OCI-LY7 (cell line): ENCODE measurements at regions of chr2 and their contacts with region 1.

Region 1: GRCh38 chr2:205706769-205707381 is 24.6 kb downstream of the NRP2 start:
- DNase-seq: peak; percentile 88
- H3K4me3 ChIP-seq: peak overlapping the region; percentile 41
- H3K27ac ChIP-seq: peak overlapping the region; percentile 80
- H3K4me1 ChIP-seq: peaks cover 37% of the 10 kb centered on the region
- CTCF ChIP-seq: no peak

Region 2: DNA sequence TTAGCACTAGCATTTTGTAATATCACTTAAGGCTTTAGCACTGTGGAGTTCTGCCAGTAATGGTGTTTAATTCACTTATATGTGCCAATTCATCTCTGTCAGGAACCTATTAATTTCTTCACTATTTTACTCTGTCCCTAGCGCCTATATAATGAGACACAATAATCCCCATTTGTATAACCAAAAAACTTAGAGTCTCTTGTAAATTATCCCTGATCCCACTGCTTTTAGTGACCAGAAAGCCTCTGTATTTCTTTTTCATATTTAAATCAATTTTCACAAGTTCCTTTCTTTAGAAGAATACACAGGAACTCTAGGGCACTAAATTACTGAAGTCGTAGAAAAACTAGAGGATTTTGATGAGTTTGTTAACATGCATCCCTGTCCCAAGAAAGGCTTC is 267.3 kb before region 1 on chr2:
- CTCF ChIA-PET with region 1: no interaction called
- POLR2A ChIA-PET with region 1: no interaction called
- intact Hi-C with region 1: no loop called
- DNase-seq: no peak
- H3K4me3 ChIP-seq: no peak overlapping the region
- H3K27ac ChIP-seq: no peak overlapping the region
- H3K4me1 ChIP-seq: no peaks in the 10 kb centered on the region
- CTCF ChIP-seq: no peak

Region 3: DNA sequence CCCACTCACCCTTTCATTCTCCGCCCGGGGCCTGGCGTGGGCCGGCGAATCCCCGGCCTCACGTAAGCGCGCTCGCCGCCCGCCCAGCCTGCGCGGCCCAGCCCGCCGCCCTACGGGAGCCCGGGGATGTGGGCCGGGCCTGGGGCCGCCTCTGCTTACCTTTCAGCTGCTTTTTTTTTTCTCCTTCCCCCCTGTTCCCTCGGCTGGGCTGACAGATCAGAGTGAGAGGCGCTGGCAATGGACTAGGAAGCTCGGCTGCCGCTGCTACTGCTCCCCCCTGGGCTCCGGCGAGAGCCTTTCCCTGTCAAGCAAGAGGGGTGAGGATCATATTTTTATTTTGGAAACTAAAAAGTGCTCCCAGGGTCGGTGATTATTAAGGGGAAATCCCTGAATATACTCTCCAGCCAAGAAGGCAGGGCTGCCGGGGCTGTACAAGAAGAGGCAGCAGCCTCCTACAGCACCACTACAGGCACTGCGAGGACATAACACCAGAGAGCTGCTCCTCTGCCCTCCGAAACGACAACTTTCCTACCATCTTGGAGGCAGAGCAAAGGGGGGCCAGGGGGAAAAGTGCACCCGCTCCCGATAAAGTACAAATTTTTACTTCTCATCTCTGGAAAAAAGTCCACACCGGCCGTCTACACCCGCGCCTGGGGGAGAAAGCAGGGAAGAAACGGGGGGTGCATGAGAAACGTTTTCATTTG is 379.0 kb after region 1 on chr2 and contains the start of gene INO80D:
- CTCF ChIA-PET with region 1: no interaction called
- POLR2A ChIA-PET with region 1: interaction called, 5 read pairs
- intact Hi-C with region 1: loop called (anchors 10 kb)
- DNase-seq: peak; percentile 89
- H3K4me3 ChIP-seq: peak within 1 kb of the TSS; percentile 92
- H3K27ac ChIP-seq: peak within 1 kb of the TSS; percentile 94
- H3K4me1 ChIP-seq: peaks cover 29% of the 10 kb centered on the region
- CTCF ChIP-seq: peak; percentile 75
- total RNA-seq, gene INO80D: 8.2 and 14.2 TPM in 2 replicates

Region 4: GRCh38 chr2:206305523-206306245 is 598.8 kb after region 1 on chr2:
- CTCF ChIA-PET with region 1: no interaction called
- POLR2A ChIA-PET with region 1: no interaction called
- intact Hi-C with region 1: no loop called
- DNase-seq: no peak
- H3K4me3 ChIP-seq: no peak overlapping the region
- H3K27ac ChIP-seq: no peak overlapping the region
- H3K4me1 ChIP-seq: no peaks in the 10 kb centered on the region
- CTCF ChIP-seq: no peak